ENCODE measurements at regions of chr2 and their contacts with region 1.

Region 1: DNA sequence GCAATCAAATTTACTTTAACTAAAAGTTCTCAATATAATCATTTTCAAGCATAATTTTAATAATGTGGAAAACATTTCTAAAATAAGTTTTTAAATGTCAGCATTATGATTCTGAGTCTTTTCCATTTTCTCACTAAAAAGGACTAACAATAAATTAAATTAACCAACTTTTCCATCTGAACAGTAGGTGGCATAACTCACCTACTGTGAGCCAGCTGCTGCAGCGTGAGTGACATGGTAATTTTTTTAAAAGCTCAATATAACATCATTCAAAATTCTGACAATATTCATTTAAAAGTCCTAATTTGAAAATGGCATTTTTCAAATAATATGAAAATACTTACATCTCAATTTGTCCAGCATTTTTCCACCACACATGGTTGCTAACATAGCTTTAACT is 66.5 kb downstream of the DTNB start:
- DNase-seq: peak; percentile 38
- ATAC-seq: no peak
- H3K4me3 Mint-ChIP-seq: no peak overlapping the region
- H3K27ac Mint-ChIP-seq: no peak overlapping the region
- H3K4me1 Mint-ChIP-seq: peaks cover 18% of the 10 kb centered on the region
- H3K27me3 Mint-ChIP-seq: no peaks in the 10 kb centered on the region

Region 2: GRCh38 chr2:25558262-25558661 is 48.6 kb before region 1 on chr2:
- CTCF ChIA-PET with region 1: interaction called, 10 read pairs
- POLR2A ChIA-PET with region 1: no interaction called
- DNase-seq: peak; percentile 68
- ATAC-seq: peak; percentile 98
- H3K4me3 Mint-ChIP-seq: peak overlapping the region; percentile 35
- H3K27ac Mint-ChIP-seq: peak overlapping the region; percentile 92
- H3K4me1 Mint-ChIP-seq: peaks cover 44% of the 10 kb centered on the region
- H3K27me3 Mint-ChIP-seq: no peaks in the 10 kb centered on the region

Region 3: GRCh38 chr2:25596516-25597244 is 10.2 kb before region 1 on chr2:
- CTCF ChIA-PET with region 1: interaction called, 24 read pairs
- POLR2A ChIA-PET with region 1: no interaction called
- DNase-seq: no peak
- ATAC-seq: no peak
- H3K4me3 Mint-ChIP-seq: no peak overlapping the region
- H3K27ac Mint-ChIP-seq: no peak overlapping the region
- H3K4me1 Mint-ChIP-seq: peaks cover 13% of the 10 kb centered on the region
- H3K27me3 Mint-ChIP-seq: no peaks in the 10 kb centered on the region

Region 4: DNA sequence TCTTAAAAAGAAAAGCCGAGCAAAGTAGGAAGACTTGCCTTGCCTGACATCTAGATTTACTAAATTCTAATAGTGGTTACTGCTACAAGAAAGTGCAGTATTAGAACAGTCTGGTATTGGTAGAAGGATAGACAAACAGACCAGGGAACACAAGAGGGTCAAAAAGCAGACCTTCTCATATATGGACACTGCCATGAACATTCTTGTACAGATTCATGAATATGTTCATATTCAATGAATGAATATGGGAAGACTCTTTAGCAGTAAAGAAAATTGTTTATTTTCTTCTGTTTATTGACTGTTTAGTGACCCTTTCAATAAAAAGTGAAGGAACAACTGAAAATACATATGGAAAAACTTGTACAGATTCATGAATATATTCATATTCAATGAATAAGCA is 28.9 kb after region 1 on chr2:
- CTCF ChIA-PET with region 1: no interaction called
- POLR2A ChIA-PET with region 1: no interaction called
- DNase-seq: no peak
- ATAC-seq: no peak
- H3K4me3 Mint-ChIP-seq: no peak overlapping the region
- H3K27ac Mint-ChIP-seq: no peak overlapping the region
- H3K4me1 Mint-ChIP-seq: no peaks in the 10 kb centered on the region
- H3K27me3 Mint-ChIP-seq: no peaks in the 10 kb centered on the region

Region 5: GRCh38 chr2:25664183-25664964 is 57.5 kb after region 1 on chr2:
- CTCF ChIA-PET with region 1: interaction called, 59 read pairs
- POLR2A ChIA-PET with region 1: no interaction called
- DNase-seq: peak; percentile 35
- ATAC-seq: no peak
- H3K4me3 Mint-ChIP-seq: no peak overlapping the region
- H3K27ac Mint-ChIP-seq: no peak overlapping the region
- H3K4me1 Mint-ChIP-seq: peaks cover 7% of the 10 kb centered on the region
- H3K27me3 Mint-ChIP-seq: no peaks in the 10 kb centered on the region

Region 6: GRCh38 chr2:25700221-25700660 is 93.3 kb after region 1 on chr2:
- CTCF ChIA-PET with region 1: interaction called, 132 read pairs
- POLR2A ChIA-PET with region 1: no interaction called
- DNase-seq: peak; percentile 53
- ATAC-seq: peak; percentile 51
- H3K4me3 Mint-ChIP-seq: no peak overlapping the region
- H3K27ac Mint-ChIP-seq: no peak overlapping the region
- H3K4me1 Mint-ChIP-seq: no peaks in the 10 kb centered on the region
- H3K27me3 Mint-ChIP-seq: peaks cover 3% of the 10 kb centered on the region

Region 7: DNA sequence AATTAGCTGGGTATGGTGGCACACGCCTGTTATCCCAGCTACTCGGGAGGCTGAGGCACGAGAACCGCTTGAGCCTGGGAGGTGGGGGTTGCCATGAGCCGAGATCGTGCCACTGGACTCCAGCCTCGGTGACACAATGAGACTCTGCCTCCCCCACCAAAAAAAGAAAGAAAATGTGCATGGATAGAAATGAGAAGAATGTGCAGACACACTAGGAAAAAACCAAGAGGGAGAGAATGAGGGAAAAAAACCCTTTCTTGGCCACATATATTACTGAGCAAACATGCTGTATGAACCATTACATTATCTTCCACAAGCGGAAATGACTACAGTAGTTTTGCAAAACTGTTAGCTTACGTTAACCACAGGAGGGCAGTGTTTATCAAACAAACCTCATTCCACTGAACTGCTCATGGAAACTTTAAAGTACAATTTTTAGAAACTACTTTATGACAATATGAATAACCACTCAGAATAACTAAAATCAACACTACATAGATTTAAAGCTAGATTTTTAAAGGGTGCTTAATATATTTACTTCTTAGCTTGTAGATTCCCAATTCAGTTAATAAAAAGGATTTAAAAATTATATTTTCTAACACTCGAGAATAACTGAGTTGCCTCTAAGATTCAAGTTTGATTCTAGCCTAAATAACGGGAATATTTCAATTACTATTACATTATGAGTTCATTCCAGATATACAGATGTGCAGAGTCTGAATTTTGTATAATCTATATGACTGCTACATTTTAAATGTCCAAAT is 245.0 kb after region 1 on chr2:
- CTCF ChIA-PET with region 1: interaction called, 66 read pairs
- POLR2A ChIA-PET with region 1: no interaction called
- DNase-seq: peak; percentile 60
- ATAC-seq: peak; percentile 86
- H3K4me3 Mint-ChIP-seq: peak overlapping the region; percentile 66
- H3K27ac Mint-ChIP-seq: peak overlapping the region; percentile 84
- H3K4me1 Mint-ChIP-seq: peaks cover 43% of the 10 kb centered on the region
- H3K27me3 Mint-ChIP-seq: no peaks in the 10 kb centered on the region

Region 8: GRCh38 chr2:25991965-25992364 is 385.1 kb after region 1 on chr2:
- CTCF ChIA-PET with region 1: interaction called, 14 read pairs
- POLR2A ChIA-PET with region 1: no interaction called
- DNase-seq: no peak
- ATAC-seq: no peak
- H3K4me3 Mint-ChIP-seq: no peak overlapping the region
- H3K27ac Mint-ChIP-seq: no peak overlapping the region
- H3K4me1 Mint-ChIP-seq: peaks cover 23% of the 10 kb centered on the region
- H3K27me3 Mint-ChIP-seq: peaks cover 7% of the 10 kb centered on the region